Activated naive CD4-positive, alpha-beta T cell treated with anti-CD3 and anti-CD28 coated beads for 36 hours (primary cell): ENCODE measurements at regions of chr11 and their contacts with region 1.

Region 1: GRCh38 chr11:35617687-35618496 is at the start of gene FJX1:
- DNase-seq: peak; percentile 38
- H3K4me3 Mint-ChIP-seq: peak within 1 kb of the TSS; percentile 70
- H3K27ac Mint-ChIP-seq: no peak within 1 kb of the TSS
- H3K4me1 Mint-ChIP-seq: peaks cover 12% of the 10 kb centered on the region
- H3K27me3 Mint-ChIP-seq: peaks cover 48% of the 10 kb centered on the region
- total RNA-seq, gene FJX1: 0.77 to 0.98 TPM

Region 2: GRCh38 chr11:35525501-35526175 is 92.3 kb before region 1 on chr11 and contains the start of gene PAMR1:
- CTCF ChIA-PET with region 1: no interaction called
- intact Hi-C with region 1: no loop called
- DNase-seq: peak; percentile 54
- H3K4me3 Mint-ChIP-seq: no peak within 1 kb of the TSS
- H3K27ac Mint-ChIP-seq: no peak within 1 kb of the TSS
- H3K4me1 Mint-ChIP-seq: peaks cover 12% of the 10 kb centered on the region
- H3K27me3 Mint-ChIP-seq: peaks cover 58% of the 10 kb centered on the region
- total RNA-seq, gene PAMR1: not detected

Region 3: DNA sequence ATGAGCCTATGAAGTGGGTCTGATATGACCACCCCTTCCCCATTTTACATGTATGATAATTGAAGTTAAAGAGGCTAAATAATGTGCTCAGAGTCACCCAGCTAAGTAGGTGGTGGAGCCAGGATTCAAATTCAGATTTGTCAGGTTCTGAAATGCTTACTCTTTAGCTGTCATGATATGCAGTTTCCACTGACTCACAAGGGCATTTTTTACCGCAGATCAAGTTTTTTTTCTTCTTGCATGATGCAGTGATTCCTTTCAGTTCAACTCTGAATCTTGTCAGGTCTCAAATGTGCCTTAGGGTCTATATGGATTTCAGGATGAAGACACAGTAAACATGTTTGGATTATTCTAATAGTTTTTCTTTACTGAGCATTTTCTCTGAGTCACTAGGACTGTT is 32.1 kb after region 1 on chr11:
- CTCF ChIA-PET with region 1: interaction called, 3 read pairs
- intact Hi-C with region 1: loop called (anchors 1 kb)
- DNase-seq: peak; percentile 38
- H3K4me3 Mint-ChIP-seq: no peak overlapping the region
- H3K27ac Mint-ChIP-seq: no peak overlapping the region
- H3K4me1 Mint-ChIP-seq: peaks cover 8% of the 10 kb centered on the region
- H3K27me3 Mint-ChIP-seq: peaks cover 20% of the 10 kb centered on the region

Region 4: DNA sequence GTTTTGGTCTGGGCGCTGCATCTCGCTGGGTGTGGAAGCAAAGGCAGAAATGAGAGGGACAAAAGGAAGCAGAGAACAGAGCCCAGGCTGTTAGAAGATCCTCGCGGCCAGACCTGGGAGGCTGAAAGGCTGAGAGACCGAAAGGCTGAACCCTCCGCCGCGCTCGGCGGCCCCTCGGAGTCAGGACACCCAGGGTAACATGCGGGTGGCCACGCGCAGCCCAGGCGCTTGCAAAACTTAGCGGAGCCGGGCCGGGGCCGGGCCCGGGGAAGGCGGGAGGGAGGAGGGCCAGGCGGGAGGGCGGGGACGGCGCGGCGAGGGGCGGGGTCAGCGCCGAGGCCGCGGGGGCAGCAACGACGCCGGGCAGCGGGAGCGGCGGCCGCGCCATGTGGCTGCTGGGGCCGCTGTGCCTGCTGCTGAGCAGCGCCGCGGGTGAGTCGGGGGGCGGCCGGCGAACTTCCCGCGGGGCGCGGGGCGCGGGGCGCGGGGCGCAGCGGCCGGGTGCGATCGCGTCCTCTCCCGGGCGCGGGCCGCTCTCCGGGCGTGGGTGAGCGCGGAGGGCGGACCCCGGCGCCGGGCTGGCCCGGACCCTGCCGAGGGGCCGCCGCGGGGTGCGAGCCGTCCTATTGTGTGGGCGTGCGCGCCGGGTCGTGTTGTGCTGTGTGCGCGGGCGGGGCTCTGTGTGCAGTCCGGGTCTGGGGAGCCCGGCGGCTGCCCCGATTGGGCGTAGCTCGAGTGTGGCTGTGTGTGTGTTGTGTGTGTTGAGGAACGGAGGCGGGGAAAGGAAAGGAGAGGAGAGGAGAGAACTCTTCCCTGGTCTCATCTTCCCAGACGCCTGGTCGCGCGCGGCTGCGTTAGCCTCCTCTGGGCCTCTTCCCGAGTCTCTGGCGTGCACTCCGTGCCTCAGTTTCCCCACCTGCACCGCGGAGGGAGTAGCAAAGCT is 326.1 kb after region 1 on chr11 and contains the start of gene LDLRAD3:
- CTCF ChIA-PET with region 1: no interaction called
- intact Hi-C with region 1: loop called (anchors 5 kb)
- DNase-seq: peak; percentile 31
- H3K4me3 Mint-ChIP-seq: peak within 1 kb of the TSS; percentile 74
- H3K27ac Mint-ChIP-seq: no peak within 1 kb of the TSS
- H3K4me1 Mint-ChIP-seq: peaks cover 9% of the 10 kb centered on the region
- H3K27me3 Mint-ChIP-seq: peaks cover 41% of the 10 kb centered on the region
- total RNA-seq, gene LDLRAD3: 0.17 to 0.22 TPM

Region 5: DNA sequence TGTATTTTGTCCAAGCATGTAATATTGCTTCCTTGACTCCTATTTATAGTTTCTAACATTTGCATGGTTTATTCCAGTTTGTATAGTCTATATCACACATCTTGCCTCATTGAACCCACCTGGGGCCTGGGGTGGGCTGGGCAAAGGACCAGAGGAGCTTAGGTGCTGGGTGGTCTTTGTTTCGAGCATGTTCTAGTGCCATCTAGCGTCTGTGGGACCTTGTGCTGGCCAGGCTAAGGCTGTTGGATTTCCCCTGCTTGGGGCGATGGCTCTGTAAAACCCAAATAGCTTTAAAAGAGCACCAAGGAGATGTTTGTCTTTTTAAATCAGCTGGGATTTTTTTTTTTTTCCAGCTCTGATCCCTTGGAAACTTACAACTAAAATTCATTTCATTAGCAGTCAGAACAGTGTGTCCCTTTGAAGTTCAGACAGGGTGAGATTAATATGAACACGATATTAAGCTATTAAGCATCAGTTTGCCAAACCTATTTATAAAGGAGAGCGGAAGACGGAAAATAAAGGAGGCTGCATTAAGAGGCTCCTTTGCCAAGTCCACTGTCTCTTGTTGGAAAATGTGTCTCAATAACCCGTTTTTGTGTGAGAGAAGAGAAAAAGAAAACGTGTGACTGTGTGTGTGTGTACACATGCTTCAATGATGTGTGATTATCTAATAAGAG is 514.0 kb after region 1 on chr11:
- CTCF ChIA-PET with region 1: interaction called, 4 read pairs
- intact Hi-C with region 1: loop called (anchors 1 kb)
- DNase-seq: peak; percentile 41
- H3K4me3 Mint-ChIP-seq: no peak overlapping the region
- H3K27ac Mint-ChIP-seq: no peak overlapping the region
- H3K4me1 Mint-ChIP-seq: no peaks in the 10 kb centered on the region
- H3K27me3 Mint-ChIP-seq: peaks cover 11% of the 10 kb centered on the region

Region 6: GRCh38 chr11:36258730-36259360 is 641.0 kb after region 1 on chr11:
- CTCF ChIA-PET with region 1: interaction called, 10 read pairs
- intact Hi-C with region 1: loop called (anchors 1 kb)
- DNase-seq: peak; percentile 51
- H3K4me3 Mint-ChIP-seq: no peak overlapping the region
- H3K27ac Mint-ChIP-seq: no peak overlapping the region
- H3K4me1 Mint-ChIP-seq: no peaks in the 10 kb centered on the region
- H3K27me3 Mint-ChIP-seq: peaks cover 27% of the 10 kb centered on the region

Region 7: DNA sequence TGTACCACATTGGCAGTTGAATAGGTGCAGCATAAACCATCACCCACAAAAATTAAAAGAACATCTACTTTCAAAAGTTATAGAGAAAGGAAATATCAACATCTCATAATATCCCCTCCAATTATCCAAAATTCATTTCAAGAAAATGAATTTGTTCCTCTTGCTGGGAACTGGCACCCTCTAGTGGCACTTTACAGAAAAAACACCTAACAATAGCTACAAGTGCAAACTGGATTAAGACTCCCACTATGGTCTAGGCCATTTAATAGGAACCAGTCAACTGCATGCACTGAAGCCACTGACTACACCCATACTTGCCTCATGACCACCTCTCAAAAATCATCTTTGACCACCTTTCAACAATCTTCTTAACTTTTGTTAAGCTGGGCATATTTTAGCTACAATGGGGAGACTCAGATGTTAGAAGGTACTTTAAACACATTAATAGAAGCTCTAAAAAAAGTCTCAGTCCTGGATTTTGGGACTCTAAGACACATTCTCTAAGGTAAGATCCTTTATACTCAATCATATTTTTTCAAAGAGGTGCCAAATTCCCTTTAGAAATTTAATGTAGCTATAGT is 874.9 kb after region 1 on chr11:
- CTCF ChIA-PET with region 1: no interaction called
- intact Hi-C with region 1: loop called (anchors 1 kb)
- DNase-seq: peak; percentile 44
- H3K4me3 Mint-ChIP-seq: no peak overlapping the region
- H3K27ac Mint-ChIP-seq: peak overlapping the region; percentile 28
- H3K4me1 Mint-ChIP-seq: peaks cover 22% of the 10 kb centered on the region
- H3K27me3 Mint-ChIP-seq: no peaks in the 10 kb centered on the region